ENCODE measurements at regions of chr7 and their contacts with region 1.

Region 1: DNA sequence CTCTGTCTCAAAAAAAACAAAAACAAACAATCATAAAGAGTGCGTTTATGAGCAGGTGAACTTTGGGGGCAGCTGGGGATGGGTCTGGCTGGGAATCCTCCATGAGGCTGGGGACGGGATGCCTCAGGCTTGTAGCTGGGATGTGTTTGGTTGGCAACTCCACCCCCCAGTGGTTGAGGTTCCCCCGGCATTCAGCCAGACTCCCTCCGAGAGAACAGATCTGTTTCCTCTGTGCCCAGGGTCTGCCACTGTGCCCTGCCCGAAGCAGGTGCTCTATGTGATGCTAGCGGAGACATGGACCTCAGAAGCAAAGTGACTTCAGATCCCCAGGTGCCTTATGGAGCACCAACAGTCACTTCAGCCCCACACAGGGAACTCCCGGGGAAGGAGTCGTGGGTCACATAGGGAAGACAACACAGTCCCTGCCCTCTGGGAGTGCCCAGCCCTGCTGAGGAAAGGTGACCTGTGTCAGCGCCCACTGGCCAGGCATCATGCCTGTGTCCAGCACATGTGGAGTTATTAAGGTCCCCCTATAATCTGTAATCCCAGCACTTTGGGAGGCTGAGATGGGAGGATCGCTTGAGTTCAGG is 29.3 kb upstream of the GTF2IRD1 start:
- DNase-seq: peak; percentile 46
- H3K4me3 ChIP-seq: no peak overlapping the region
- H3K27ac ChIP-seq: no peak overlapping the region
- H3K4me1 ChIP-seq: peaks cover 0 to 2% (median 0%) of the 10 kb centered on the region in 4 donors
- H3K27me3 ChIP-seq: no peaks in the 10 kb centered on the region
- CTCF ChIP-seq: no peak
- EP300 ChIP-seq: no peak
- POLR2A ChIP-seq: no peak

Region 2: DNA sequence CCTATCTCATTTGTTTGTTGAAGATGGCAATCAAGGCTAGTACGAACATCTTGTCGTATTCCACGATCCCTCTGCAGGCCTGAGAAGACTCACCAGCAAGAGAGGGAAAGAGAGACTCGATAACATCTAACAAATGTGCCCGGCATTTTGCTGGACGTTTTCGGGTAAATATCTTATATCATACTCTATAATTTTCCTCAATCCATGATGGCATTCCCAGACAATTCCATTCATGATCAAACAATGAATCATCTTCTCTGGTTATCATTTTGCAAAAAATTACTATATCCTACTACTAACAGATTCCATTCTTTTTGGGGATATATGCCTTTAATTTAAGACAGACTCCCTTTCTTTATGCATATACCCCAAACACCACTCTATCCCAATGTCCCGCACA is 1714.5 kb before region 1 on chr7:
- intact Hi-C with region 1: no loop called
- DNase-seq: no peak
- H3K4me3 ChIP-seq: no peak overlapping the region
- H3K27ac ChIP-seq: no peak overlapping the region
- H3K4me1 ChIP-seq: no peaks in the 10 kb centered on the region
- H3K27me3 ChIP-seq: no peaks in the 10 kb centered on the region
- CTCF ChIP-seq: no peak
- EP300 ChIP-seq: no peak
- POLR2A ChIP-seq: no peak

Region 3: GRCh38 chr7:74569501-74570075 is 145.2 kb after region 1 on chr7:
- intact Hi-C with region 1: loop called (anchors 5 kb)
- DNase-seq: no peak
- H3K4me3 ChIP-seq: no peak overlapping the region
- H3K27ac ChIP-seq: no peak overlapping the region
- H3K4me1 ChIP-seq: no peaks in the 10 kb centered on the region
- H3K27me3 ChIP-seq: no peaks in the 10 kb centered on the region
- CTCF ChIP-seq: no peak
- EP300 ChIP-seq: no peak
- POLR2A ChIP-seq: no peak

Measured in sigmoid colon (tissue), 7 donors.